ENCODE measurements at regions of chr6 and their contacts with region 1.

Region 1: DNA sequence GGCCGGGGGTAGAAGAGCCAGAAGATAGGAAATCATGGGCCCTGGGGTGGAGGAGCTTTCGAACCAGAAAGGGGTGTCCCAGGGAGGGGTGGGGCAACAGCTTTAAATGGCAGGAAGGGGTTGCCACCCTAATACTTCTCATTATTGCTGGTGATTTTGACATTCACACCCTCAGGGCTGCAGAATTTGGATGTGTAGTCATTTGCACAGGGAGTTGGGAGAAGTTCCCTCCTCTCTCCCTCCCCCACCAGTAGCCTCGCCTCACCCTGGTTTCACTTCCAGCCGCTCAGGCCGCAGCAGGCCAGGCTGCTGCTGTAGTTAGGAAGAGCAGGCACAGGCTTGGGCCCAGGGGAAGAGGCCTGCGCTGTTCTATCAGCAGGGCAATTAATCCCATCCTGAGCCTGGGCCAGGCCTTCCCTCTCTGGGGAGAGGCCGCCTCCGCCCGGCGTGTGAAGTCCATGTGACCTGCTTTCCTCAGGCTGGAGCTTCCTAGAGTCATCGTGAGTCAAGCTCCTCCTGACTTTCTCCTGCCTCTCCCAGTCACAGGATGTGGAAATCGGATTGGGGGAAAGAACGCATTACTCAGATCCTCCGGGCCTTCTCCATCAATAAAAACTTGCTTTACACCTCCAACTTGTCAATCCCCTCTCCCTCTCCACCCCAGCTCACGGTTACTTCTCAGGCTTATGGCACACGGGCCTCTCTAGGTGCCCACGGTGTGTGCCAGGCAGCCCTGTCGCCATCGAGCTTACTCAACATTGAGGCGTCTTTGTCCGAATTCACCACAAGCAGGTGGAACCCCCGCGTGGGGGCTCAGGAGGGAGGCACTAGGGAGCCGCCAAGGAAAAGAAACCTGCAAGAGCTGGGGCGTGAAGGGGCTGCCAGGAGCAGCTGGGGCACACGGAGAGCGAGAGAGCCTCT is 7.8 kb downstream of the ADTRP start:
- DNase-seq: peak; percentile 100
- H3K4me3 Mint-ChIP-seq: peak overlapping the region; percentile 69
- H3K27ac Mint-ChIP-seq: peak overlapping the region; percentile 96
- H3K4me1 Mint-ChIP-seq: peaks cover 61% of the 10 kb centered on the region
- H3K27me3 Mint-ChIP-seq: no peaks in the 10 kb centered on the region
- CTCF ChIP-seq: no peak

Region 2: DNA sequence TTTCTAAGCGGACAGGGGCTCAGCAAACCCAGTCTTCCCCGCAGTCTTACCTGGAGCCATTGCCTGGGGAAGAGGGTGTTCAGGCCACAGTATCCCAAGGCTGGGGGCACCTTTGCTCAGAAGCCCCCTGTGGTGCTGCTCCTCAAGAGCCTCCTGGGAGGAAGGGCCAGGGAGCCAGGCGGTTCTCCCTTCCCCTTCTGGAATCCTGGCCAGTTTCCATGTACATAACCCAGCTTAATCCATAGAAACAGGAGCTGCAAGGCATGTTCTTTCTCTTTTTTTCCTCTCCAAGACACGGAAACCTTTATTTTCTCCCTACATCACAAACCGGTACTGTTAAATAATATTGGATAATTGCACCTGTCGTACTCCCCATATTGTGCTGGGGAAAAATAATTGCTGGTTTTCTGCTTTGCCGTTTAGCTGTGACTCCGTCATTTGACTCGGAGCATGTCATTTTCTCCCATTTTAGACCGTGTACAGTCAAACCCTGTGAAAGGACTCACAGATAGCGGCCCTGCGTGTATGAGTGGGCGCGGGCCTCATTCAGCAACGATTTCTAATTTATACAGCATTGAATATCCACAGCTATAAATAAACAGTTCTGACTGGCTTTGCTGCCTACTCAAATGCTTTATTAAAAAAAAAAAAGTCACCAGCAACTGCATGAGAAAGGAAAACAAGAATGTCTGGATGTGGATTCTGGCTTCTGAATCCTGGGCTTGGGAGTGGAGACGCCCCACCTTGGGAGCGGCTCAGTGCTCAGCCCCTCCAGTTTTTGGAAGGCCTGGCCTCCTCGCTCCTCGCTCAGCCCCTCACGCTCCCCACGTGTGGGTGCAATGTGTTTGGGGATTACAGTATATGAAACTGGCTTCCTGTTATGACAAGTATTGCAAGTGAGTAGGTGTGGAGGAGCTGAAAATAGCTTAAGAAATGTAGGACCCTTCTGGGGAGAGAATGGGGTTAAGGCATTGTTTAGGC is 59.5 kb before region 1 on chr6:
- CTCF ChIA-PET with region 1: no interaction called
- POLR2A ChIA-PET with region 1: interaction called, 47 read pairs
- intact Hi-C with region 1: no loop called
- DNase-seq: no peak
- H3K4me3 Mint-ChIP-seq: no peak overlapping the region
- H3K27ac Mint-ChIP-seq: peak overlapping the region; percentile 66
- H3K4me1 Mint-ChIP-seq: peaks cover 20% of the 10 kb centered on the region
- H3K27me3 Mint-ChIP-seq: no peaks in the 10 kb centered on the region
- CTCF ChIP-seq: no peak

Region 3: DNA sequence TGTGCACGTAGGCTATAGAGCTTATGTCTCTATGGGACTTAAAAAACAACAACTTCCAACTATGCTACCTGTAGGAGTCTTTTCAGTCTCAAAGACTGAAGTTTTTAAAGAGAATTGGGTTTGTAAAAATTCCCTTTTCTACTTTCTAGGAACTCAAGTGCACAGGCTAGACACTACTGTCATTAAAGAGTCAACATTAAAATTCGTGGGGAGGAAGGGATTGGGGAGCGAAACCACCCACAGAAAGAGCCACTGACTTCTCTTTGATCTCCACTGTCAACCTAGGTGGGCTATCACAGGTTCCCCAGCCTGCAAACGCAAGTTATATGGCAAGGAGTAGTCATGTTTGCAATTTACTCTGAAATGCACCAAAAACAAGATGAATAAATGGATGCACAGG is 29.9 kb before region 1 on chr6:
- CTCF ChIA-PET with region 1: no interaction called
- POLR2A ChIA-PET with region 1: no interaction called
- intact Hi-C with region 1: no loop called
- DNase-seq: no peak
- H3K4me3 Mint-ChIP-seq: no peak overlapping the region
- H3K27ac Mint-ChIP-seq: no peak overlapping the region
- H3K4me1 Mint-ChIP-seq: no peaks in the 10 kb centered on the region
- H3K27me3 Mint-ChIP-seq: no peaks in the 10 kb centered on the region
- CTCF ChIP-seq: no peak

Region 4: GRCh38 chr6:11785774-11786579 is 15.2 kb after region 1 on chr6:
- CTCF ChIA-PET with region 1: interaction called, 6 read pairs
- POLR2A ChIA-PET with region 1: interaction called, 17 read pairs
- intact Hi-C with region 1: no loop called
- DNase-seq: no peak
- H3K4me3 Mint-ChIP-seq: no peak overlapping the region
- H3K27ac Mint-ChIP-seq: no peak overlapping the region
- H3K4me1 Mint-ChIP-seq: peaks cover 5% of the 10 kb centered on the region
- H3K27me3 Mint-ChIP-seq: no peaks in the 10 kb centered on the region
- CTCF ChIP-seq: no peak

Region 5: GRCh38 chr6:11815231-11815630 is 44.4 kb after region 1 on chr6:
- CTCF ChIA-PET with region 1: interaction called, 3 read pairs
- POLR2A ChIA-PET with region 1: interaction called, 37 read pairs
- intact Hi-C with region 1: loop called (anchors 1 kb)
- DNase-seq: no peak
- H3K4me3 Mint-ChIP-seq: no peak overlapping the region
- H3K27ac Mint-ChIP-seq: no peak overlapping the region
- H3K4me1 Mint-ChIP-seq: peaks cover 7% of the 10 kb centered on the region
- H3K27me3 Mint-ChIP-seq: no peaks in the 10 kb centered on the region
- CTCF ChIP-seq: no peak

Region 6: DNA sequence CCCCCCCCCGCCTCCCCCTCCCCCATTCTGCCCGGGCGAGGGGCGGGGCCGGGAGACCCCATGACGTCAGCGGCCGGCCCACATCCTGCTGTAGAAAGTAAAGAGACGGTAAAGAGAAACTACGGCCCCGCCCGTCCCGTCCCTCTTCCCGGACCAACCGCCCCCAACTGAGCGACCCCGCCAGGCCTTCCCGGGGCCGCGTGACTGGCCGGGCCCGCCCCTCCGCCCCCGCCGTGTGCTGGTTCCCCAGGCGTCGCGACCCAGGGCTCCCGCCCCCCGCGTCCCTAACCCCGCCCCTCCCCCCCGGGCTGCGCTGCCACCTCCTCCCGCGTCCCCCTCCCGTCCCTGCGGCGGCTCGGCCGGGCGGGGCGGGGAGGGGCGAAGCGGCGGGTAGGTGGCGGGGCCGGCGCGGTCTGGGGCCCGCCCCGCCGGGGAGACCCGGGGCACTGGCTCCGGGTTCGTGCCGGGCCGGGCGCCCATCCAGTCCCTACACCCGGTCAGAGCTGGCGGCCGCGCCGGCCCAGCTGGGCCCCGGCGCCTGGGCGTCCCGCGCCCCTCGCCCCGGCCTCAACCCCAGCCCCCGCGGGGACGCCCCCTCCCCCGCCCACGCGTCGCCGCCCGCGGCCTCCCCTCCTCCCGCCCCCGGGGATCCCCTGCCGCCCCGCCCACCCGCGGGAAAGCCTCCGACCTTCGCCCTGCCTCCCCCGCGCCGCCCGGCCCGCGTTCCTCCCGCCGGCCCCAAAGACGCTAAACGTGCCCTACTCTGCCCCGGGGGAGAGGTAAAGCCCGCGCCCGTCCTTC is 240.7 kb after region 1 on chr6:
- CTCF ChIA-PET with region 1: interaction called, 8 read pairs
- POLR2A ChIA-PET with region 1: interaction called, 248 read pairs
- intact Hi-C with region 1: loop called (anchors 1 kb)
- DNase-seq: peak; percentile 97
- H3K4me3 Mint-ChIP-seq: peak overlapping the region; percentile 89
- H3K27ac Mint-ChIP-seq: peak overlapping the region; percentile 99
- H3K4me1 Mint-ChIP-seq: peaks cover 19% of the 10 kb centered on the region
- H3K27me3 Mint-ChIP-seq: no peaks in the 10 kb centered on the region
- CTCF ChIP-seq: no peak

Measured in MCF 10A (cell line).